Cardiac septum (tissue), 1 donor: ENCODE measurements at regions of chr6 and their contacts with region 1.

Region 1: DNA sequence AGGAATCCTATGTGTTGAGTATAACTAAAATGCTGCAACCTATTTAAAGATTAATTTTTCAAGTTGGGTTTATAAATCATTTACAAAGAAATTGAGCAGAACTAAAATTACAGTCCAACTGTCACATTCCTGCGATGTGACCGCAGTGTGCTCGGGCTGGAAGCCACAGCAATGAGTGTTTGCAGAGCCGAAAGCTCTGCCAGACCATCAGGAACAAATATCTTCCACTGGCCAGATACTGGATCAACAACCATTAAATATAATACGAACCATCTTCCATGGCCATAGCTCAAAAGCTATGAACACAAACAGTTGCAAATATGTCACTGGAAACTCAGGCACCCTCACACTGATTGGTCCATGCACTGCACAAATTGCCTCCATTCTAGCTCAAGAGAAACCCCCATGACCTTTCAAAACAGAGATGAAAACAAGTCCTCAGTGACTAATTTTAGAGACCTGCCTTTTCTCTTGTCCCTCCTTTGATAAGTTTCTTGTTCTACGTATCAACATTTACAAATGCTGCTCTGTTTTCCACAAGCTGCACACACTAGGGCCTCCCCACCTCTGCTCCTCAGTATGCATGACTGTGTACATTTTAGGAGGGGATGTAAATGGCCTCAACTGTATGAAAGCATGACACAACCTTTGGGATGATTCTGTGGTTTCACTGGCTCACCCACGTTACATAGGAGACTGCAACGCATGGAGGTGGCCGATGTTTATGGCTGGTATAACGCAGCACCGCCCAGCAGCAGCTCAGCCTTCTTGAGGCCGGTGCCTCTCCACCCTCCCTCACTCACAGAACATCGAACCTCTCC is 171.7 kb downstream of the WDR27 start:
- DNase-seq: no peak

Region 2: DNA sequence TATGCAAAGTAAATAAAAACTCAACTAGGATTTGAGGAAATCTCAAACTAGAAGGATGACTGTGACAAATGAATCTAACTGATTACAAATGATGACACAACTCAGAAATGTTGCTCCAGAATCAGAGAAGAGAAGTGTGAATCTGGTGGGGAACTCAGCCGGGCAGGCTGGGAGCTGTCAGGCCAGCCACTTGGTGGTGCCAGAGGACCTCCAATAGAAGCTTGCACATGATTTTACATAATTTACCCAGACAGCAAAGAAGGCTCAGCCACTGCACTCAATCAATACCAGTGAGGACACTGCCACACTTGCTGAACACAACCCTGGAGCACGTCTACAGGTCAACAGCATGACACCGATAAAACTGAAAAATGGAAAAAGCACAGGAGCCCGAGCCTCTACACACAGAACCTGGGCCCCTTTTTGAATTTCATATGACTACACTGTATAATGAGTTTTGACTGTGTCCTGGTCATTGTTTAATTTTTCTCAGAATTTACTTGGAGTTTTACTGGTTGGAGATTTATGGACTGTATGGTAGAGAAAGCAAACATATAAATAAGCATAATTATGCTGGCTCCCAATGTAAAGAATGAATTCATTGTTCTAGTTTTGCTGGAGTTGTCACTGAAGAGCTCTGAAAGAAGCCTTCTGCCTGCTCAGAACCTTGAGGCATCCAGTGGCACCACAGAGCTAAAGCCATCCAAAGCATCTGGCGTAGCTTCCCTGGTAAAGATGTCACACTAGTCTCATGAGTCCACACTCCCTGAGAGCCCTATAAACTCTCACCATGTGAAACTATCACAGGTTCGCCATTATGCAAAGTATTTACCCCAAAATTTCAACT is 573.0 kb before region 1 on chr6:
- intact Hi-C with region 1: loop called (anchors 10 kb)
- DNase-seq: no peak